HEK293T (cell line): ENCODE measurements at regions of chrX and their contacts with region 1.

Region 1: GRCh38 chrX:46653482-46653881 is 79.9 kb downstream of the CHST7 start:
- DNase-seq: peak; percentile 43

Region 2: DNA sequence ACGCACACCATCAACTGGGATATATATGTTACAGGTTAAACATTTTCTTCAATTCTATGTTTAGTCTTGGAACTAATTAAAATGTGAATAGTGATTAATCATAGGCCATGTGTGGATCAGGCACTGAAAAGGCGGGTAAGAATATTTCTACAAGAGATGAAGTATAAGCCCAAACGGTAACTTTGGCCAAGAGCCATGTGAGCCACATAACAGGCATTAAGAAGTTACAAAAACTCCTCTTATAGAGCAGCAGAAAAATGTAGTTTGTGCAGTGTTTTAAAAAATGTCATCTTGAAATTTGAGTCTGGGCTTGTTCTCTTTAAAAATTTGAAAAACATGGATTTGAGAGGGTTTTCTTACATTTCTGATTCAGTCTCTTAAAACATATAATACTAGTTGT is 931.0 kb before region 1 on chrX:
- CTCF ChIA-PET with region 1: interaction called, 11 read pairs
- POLR2A ChIA-PET with region 1: no interaction called
- DNase-seq: no peak

Region 3: GRCh38 chrX:46485897-46486296 is 167.6 kb before region 1 on chrX:
- CTCF ChIA-PET with region 1: no interaction called
- POLR2A ChIA-PET with region 1: no interaction called
- DNase-seq: no peak

Region 4: GRCh38 chrX:46642145-46642544 is 11.3 kb before region 1 on chrX:
- CTCF ChIA-PET with region 1: no interaction called
- POLR2A ChIA-PET with region 1: no interaction called
- DNase-seq: peak; percentile 35